OCI-LY7 (cell line): ENCODE measurements at regions of chr11 and their contacts with region 1.

Region 1: DNA sequence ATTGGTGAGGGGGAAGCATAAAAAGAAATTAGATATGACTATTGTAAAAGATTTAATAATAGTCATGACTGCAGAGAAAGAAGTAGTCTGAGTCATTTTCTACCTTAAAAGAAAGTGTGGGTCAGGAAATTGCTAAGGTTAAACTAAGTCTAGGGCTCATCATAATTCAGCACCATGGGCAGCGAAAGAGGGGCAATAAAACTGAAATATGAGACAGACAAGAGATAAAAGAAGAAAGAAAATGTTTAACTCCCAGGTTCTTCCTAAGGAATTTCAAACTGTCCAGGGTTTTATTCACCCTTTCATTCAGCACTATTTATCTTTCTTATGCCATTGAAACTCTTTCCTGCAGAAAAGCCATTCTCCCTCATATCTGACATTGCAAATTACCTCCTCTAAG is 114.4 kb upstream of the API5 start:
- DNase-seq: no peak
- H3K4me3 ChIP-seq: no peak overlapping the region
- H3K27ac ChIP-seq: no peak overlapping the region
- H3K4me1 ChIP-seq: no peaks in the 10 kb centered on the region
- CTCF ChIP-seq: no peak

Region 2: DNA sequence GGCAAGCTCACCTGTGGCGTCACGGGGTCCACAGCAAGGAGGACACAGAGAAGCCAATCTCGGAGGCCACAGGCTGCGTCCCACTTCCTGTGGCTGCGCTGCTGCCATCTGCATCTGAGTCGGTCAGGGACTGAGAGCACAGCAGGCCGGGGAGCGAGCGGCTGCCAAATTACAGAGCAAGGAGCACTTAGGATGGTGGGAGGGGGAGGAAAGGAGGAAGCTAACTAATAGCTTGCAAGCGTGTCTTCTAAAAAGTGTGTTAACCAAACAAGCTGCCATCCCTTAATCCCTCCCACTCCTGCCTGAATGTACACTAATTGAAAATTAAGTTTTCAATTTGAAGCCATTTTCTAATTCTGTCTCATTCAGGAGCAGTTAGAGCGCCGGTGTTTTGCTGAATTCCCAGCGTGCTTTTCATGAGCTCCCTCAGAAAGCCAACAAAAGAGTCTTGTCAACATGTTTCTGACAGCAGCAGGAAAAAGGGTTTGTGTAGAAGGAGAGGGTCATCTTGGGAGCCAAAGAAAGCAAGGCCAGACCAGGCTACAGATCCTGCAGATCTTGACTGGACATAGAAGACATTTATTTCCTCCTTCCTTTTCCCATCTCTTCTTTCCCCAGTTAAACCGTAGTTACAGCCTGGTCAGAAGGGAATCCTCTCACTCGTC is 72.0 kb after region 1 on chr11:
- CTCF ChIA-PET with region 1: no interaction called
- POLR2A ChIA-PET with region 1: no interaction called
- intact Hi-C with region 1: loop called (anchors 10 kb)
- DNase-seq: no peak
- H3K4me3 ChIP-seq: no peak overlapping the region
- H3K27ac ChIP-seq: no peak overlapping the region
- H3K4me1 ChIP-seq: no peaks in the 10 kb centered on the region
- CTCF ChIP-seq: no peak